WTC11 (cell line): ENCODE measurements at regions of chr4 and their contacts with region 1.

Region 1: GRCh38 chr4:15655229-15656037 is at the start of gene FBXL5:
- DNase-seq: peak; percentile 71
- ATAC-seq: peak; percentile 62
- H3K4me3 Mint-ChIP-seq: peak within 1 kb of the TSS; percentile 96
- H3K27ac Mint-ChIP-seq: peak within 1 kb of the TSS; percentile 99
- H3K4me1 Mint-ChIP-seq: peaks cover 38% of the 10 kb centered on the region
- H3K27me3 Mint-ChIP-seq: peaks cover 2% of the 10 kb centered on the region; the same call in 1 of the 2 replicates
- CTCF ChIP-seq: no peak
- total RNA-seq, gene FBXL5: 57.0 to 69.6 TPM (median 61.9 TPM) in 3 replicates

Region 2: GRCh38 chr4:15681207-15682015 is 26.0 kb after region 1 on chr4 and contains the start of gene FAM200B:
- CTCF ChIA-PET with region 1: no interaction called
- POLR2A ChIA-PET with region 1: interaction called, 25 read pairs
- DNase-seq: peak; percentile 100
- ATAC-seq: peak; percentile 92
- H3K4me3 Mint-ChIP-seq: peak within 1 kb of the TSS; percentile 99
- H3K27ac Mint-ChIP-seq: peak within 1 kb of the TSS; percentile 99
- H3K4me1 Mint-ChIP-seq: peaks cover 67% of the 10 kb centered on the region
- H3K27me3 Mint-ChIP-seq: no peaks in the 10 kb centered on the region
- CTCF ChIP-seq: no peak
- total RNA-seq, gene FAM200B: 22.9 to 28.4 TPM (median 25.8 TPM) in 3 replicates